ENCODE measurements at regions of chr6 and their contacts with region 1.

Region 1: GRCh38 chr6:42038811-42039408 is 11.4 kb upstream of the TAF8 start:
- DNase-seq: no peak
- H3K4me3 Mint-ChIP-seq: peak overlapping the region; percentile 73
- H3K27ac Mint-ChIP-seq: peak overlapping the region; percentile 96
- H3K4me1 Mint-ChIP-seq: peaks cover 76% of the 10 kb centered on the region
- H3K27me3 Mint-ChIP-seq: no peaks in the 10 kb centered on the region

Region 2: GRCh38 chr6:42009966-42010891 is 28.7 kb before region 1 on chr6:
- CTCF ChIA-PET with region 1: interaction called, 9 read pairs
- POLR2A ChIA-PET with region 1: interaction called, 26 read pairs
- DNase-seq: peak; percentile 33
- H3K4me3 Mint-ChIP-seq: peak overlapping the region; percentile 43
- H3K27ac Mint-ChIP-seq: peak overlapping the region; percentile 82
- H3K4me1 Mint-ChIP-seq: peaks cover 67% of the 10 kb centered on the region
- H3K27me3 Mint-ChIP-seq: no peaks in the 10 kb centered on the region

Region 3: GRCh38 chr6:42075159-42075838 is 36.4 kb after region 1 on chr6:
- CTCF ChIA-PET with region 1: no interaction called
- POLR2A ChIA-PET with region 1: no interaction called
- DNase-seq: peak; percentile 69
- H3K4me3 Mint-ChIP-seq: no peak overlapping the region
- H3K27ac Mint-ChIP-seq: no peak overlapping the region
- H3K4me1 Mint-ChIP-seq: peaks cover 18% of the 10 kb centered on the region
- H3K27me3 Mint-ChIP-seq: no peaks in the 10 kb centered on the region

Region 4: GRCh38 chr6:42136508-42137193 is 97.7 kb after region 1 on chr6:
- CTCF ChIA-PET with region 1: no interaction called
- POLR2A ChIA-PET with region 1: no interaction called
- DNase-seq: no peak
- H3K4me3 Mint-ChIP-seq: no peak overlapping the region
- H3K27ac Mint-ChIP-seq: no peak overlapping the region
- H3K4me1 Mint-ChIP-seq: peaks cover 7% of the 10 kb centered on the region
- H3K27me3 Mint-ChIP-seq: peaks cover 17% of the 10 kb centered on the region

Measured in activated CD4-positive, alpha-beta memory T cell treated with anti-CD3 and anti-CD28 coated beads, Interleukin-2, amount 10 ng/mL, durations not matched to agents 7 days and 5 days (primary cell).